HCT116 (cell line): ENCODE measurements at regions of chr18 and their contacts with region 1.

Region 1: GRCh38 chr18:24112874-24113615 is 25.8 kb upstream of the CABYR start:
- DNase-seq: peak; percentile 90
- ATAC-seq: peak; percentile 94
- H3K4me3 ChIP-seq: peak overlapping the region in 1 of 2 experiments; percentile 44; a peak in 2 of 4 replicates
- H3K27ac ChIP-seq: peak overlapping the region; percentile 51
- H3K4me1 ChIP-seq: peaks cover 18 to 22% of the 10 kb centered on the region in 2 experiments
- H3K27me3 ChIP-seq: no peaks in the 10 kb centered on the region
- CTCF ChIP-seq: no peak
- POLR2A ChIP-seq: no peak
- RAD21 ChIP-seq: 0 out of 2 replicates have a peak, but pooled peaks have one; percentile 4

Region 2: GRCh38 chr18:23972416-23972815 is 140.6 kb before region 1 on chr18:
- CTCF ChIA-PET with region 1: no interaction called
- POLR2A ChIA-PET with region 1: no interaction called
- RAD21 ChIA-PET with region 1: no interaction called
- intact Hi-C with region 1: no loop called
- DNase-seq: no peak
- ATAC-seq: no peak
- H3K4me3 ChIP-seq: no peak overlapping the region
- H3K27ac ChIP-seq: no peak overlapping the region
- H3K4me1 ChIP-seq: no peaks in the 10 kb centered on the region
- H3K27me3 ChIP-seq: no peaks in the 10 kb centered on the region
- CTCF ChIP-seq: no peak
- POLR2A ChIP-seq: no peak
- RAD21 ChIP-seq: no peak

Region 3: GRCh38 chr18:24014062-24014985 is 98.7 kb before region 1 on chr18 and contains the start of gene TTC39C:
- CTCF ChIA-PET with region 1: interaction called, 4 read pairs
- POLR2A ChIA-PET with region 1: no interaction called
- RAD21 ChIA-PET with region 1: no interaction called
- intact Hi-C with region 1: loop called (anchors 5 kb)
- DNase-seq: peak; percentile 13
- ATAC-seq: peak; percentile 79
- H3K4me3 ChIP-seq: peak within 1 kb of the TSS; percentile 77 to 85
- H3K27ac ChIP-seq: peak within 1 kb of the TSS; percentile 76
- H3K4me1 ChIP-seq: peaks cover 9 to 21% of the 10 kb centered on the region in 2 experiments; a peak in 3 of 4 replicates
- H3K27me3 ChIP-seq: no peaks in the 10 kb centered on the region
- CTCF ChIP-seq: no peak
- POLR2A ChIP-seq: peak; percentile 45
- RAD21 ChIP-seq: no peak
- total RNA-seq, gene TTC39C: 24.8 TPM

Region 4: DNA sequence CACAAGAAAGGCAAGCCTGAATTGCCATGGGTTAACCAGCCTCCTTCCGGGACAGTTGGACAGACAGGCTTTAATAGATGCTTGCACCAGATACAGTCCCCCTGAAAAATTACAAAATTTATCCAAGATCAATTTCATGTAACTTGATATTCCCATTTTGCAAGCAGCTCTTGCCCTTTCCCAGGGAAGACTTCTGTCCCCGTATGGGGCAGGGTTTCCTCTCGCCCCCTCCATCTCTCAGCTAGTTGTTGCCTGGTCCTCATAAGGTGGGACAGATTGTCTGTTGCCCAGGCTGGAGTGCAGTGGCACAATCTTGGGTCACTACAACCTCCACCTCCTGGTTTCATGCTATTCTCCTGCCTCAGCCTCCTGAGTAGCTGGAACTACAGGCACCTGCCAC is 37.3 kb before region 1 on chr18:
- CTCF ChIA-PET with region 1: no interaction called
- POLR2A ChIA-PET with region 1: no interaction called
- RAD21 ChIA-PET with region 1: no interaction called
- intact Hi-C with region 1: loop called (anchors 5 kb)
- DNase-seq: peak; percentile 4
- ATAC-seq: peak; percentile 43
- H3K4me3 ChIP-seq: no peak overlapping the region
- H3K27ac ChIP-seq: peak overlapping the region; percentile 46
- H3K4me1 ChIP-seq: peaks cover 17 to 20% of the 10 kb centered on the region in 2 experiments
- H3K27me3 ChIP-seq: no peaks in the 10 kb centered on the region
- CTCF ChIP-seq: no peak
- POLR2A ChIP-seq: no peak
- RAD21 ChIP-seq: no peak

Region 5: DNA sequence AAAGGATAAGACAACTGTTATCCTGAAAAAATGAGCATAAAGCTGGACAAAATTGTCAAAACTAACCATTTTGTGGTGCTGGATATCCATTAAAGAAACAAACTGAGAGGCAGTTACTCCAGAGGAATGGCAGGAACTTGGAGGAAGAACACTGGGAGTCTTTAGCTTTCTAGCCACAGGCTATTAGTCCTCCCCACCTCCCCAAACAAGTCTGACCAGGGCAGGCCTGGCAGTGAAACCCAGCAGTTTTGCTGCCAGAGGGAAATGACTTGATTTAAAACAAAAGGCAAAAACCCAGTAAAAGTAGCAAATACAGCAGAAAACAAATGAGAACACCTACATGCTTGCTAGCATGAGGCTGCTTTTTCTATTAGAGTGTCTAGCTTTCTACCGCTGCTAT is 249.7 kb after region 1 on chr18:
- CTCF ChIA-PET with region 1: no interaction called
- POLR2A ChIA-PET with region 1: no interaction called
- RAD21 ChIA-PET with region 1: no interaction called
- intact Hi-C with region 1: no loop called
- DNase-seq: no peak
- ATAC-seq: no peak
- H3K4me3 ChIP-seq: no peak overlapping the region
- H3K27ac ChIP-seq: no peak overlapping the region
- H3K4me1 ChIP-seq: peaks cover 2 to 7% of the 10 kb centered on the region in 2 experiments; a peak in 2 of 4 replicates
- H3K27me3 ChIP-seq: no peaks in the 10 kb centered on the region
- CTCF ChIP-seq: no peak
- POLR2A ChIP-seq: no peak
- RAD21 ChIP-seq: no peak